Caco-2 (cell line): ENCODE measurements at regions of chr13 and their contacts with region 1.

Region 1: DNA sequence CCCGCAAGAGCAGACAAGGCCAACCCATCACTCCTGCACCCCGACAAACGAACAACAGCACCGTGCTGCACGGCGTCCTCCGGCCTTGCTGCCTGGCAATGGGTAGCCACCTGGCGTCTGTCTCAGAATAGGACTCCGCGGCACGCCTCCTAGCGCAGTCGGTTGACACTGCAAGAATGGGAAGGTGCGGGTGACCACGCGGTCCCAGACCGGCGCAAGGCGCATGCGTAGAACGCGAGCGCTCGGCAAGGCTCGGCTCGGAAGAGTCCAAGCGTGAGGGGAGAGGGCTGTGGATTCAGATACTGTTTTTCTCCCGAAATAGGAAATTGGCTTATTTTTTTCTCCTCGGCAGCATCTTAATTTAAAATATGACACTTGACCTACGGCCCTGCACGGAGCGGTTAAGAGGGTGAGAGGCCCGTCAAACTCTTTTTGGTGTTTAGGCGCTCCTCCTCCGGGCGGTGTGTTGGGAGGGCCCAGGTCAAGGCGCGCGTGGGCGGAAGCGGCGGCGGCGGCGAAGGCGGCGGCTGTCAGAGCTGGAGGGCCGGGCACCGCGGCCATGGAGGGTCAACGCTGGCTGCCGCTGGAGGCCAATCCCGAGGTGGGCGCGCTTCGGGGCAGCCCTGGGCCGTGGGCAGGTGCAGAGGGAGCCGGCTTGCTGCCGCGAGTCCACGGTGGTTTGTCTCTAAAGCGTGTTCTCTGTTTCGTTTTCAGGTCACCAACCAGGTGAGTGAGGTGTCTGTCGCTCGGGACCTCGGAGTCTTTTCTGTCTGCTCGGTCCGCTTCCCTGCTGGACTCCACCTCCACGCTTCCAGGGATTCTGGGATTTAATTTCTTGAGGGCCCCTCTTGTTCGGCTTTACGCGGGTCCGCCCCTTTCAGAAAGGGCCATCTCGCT is at the start of gene UCHL3:
- DNase-seq: peak; percentile 97 to 99
- H3K4me3 ChIP-seq: peak within 1 kb of the TSS; percentile 85
- H3K4me3 Mint-ChIP-seq: peak within 1 kb of the TSS; percentile 91
- H3K27ac Mint-ChIP-seq: peak within 1 kb of the TSS; percentile 85
- H3K4me1 ChIP-seq: peaks cover 9% of the 10 kb centered on the region; the same call in 1 of the 2 replicates
- H3K4me1 Mint-ChIP-seq: peaks cover 38% of the 10 kb centered on the region
- H3K27me3 ChIP-seq: no peaks in the 10 kb centered on the region
- H3K27me3 Mint-ChIP-seq: no peaks in the 10 kb centered on the region
- CTCF ChIP-seq: peak; percentile 90 to 99
- total RNA-seq, gene UCHL3: 113 and 122 TPM in 2 replicates

Region 2: GRCh38 chr13:75372517-75372916 is 177.0 kb before region 1 on chr13:
- CTCF ChIA-PET with region 1: no interaction called
- POLR2A ChIA-PET with region 1: no interaction called
- intact Hi-C with region 1: loop called (anchors 2 kb)
- DNase-seq: peak in 1 of 2 experiments; percentile 59
- H3K4me3 ChIP-seq: no peak overlapping the region
- H3K4me3 Mint-ChIP-seq: no peak overlapping the region
- H3K27ac Mint-ChIP-seq: no peak overlapping the region
- H3K4me1 ChIP-seq: peaks cover 74% of the 10 kb centered on the region
- H3K4me1 Mint-ChIP-seq: peaks cover 46% of the 10 kb centered on the region
- H3K27me3 ChIP-seq: no peaks in the 10 kb centered on the region; the same call in 1 of the 2 replicates
- H3K27me3 Mint-ChIP-seq: no peaks in the 10 kb centered on the region
- CTCF ChIP-seq: peak; percentile 71 to 73

Region 3: GRCh38 chr13:75537401-75538365 is 11.8 kb before region 1 on chr13 and contains the start of gene COMMD6:
- CTCF ChIA-PET with region 1: no interaction called
- POLR2A ChIA-PET with region 1: no interaction called
- intact Hi-C with region 1: loop called (anchors 1 kb)
- DNase-seq: peak; percentile 90 to 91
- H3K4me3 ChIP-seq: peak within 1 kb of the TSS; percentile 87
- H3K4me3 Mint-ChIP-seq: peak within 1 kb of the TSS; percentile 92
- H3K27ac Mint-ChIP-seq: peak within 1 kb of the TSS; percentile 87
- H3K4me1 ChIP-seq: 0 out of 2 replicates have a peak, but pooled peaks cover 7% of the 10 kb centered on the region
- H3K4me1 Mint-ChIP-seq: peaks cover 14% of the 10 kb centered on the region
- H3K27me3 ChIP-seq: no peaks in the 10 kb centered on the region
- H3K27me3 Mint-ChIP-seq: no peaks in the 10 kb centered on the region
- CTCF ChIP-seq: peak; percentile 30 to 80
- total RNA-seq, gene COMMD6: 101 and 104 TPM in 2 replicates